Activated CD8-positive, alpha-beta T cell treated with anti-CD3 and anti-CD28 coated beads, Interleukin-2, amount 10 ng/mL, durations not matched to agents 7 days and 5 days (primary cell): ENCODE measurements at regions of chr12 and their contacts with region 1.

Region 1: GRCh38 chr12:116703214-116703795 is 34.6 kb downstream of the SPRING1 start:
- DNase-seq: peak; percentile 77
- ATAC-seq: peak; percentile 82
- H3K4me3 Mint-ChIP-seq: no peak overlapping the region
- H3K27ac Mint-ChIP-seq: no peak overlapping the region
- H3K4me1 Mint-ChIP-seq: peaks cover 1% of the 10 kb centered on the region
- H3K27me3 Mint-ChIP-seq: peaks cover 9% of the 10 kb centered on the region

Region 2: DNA sequence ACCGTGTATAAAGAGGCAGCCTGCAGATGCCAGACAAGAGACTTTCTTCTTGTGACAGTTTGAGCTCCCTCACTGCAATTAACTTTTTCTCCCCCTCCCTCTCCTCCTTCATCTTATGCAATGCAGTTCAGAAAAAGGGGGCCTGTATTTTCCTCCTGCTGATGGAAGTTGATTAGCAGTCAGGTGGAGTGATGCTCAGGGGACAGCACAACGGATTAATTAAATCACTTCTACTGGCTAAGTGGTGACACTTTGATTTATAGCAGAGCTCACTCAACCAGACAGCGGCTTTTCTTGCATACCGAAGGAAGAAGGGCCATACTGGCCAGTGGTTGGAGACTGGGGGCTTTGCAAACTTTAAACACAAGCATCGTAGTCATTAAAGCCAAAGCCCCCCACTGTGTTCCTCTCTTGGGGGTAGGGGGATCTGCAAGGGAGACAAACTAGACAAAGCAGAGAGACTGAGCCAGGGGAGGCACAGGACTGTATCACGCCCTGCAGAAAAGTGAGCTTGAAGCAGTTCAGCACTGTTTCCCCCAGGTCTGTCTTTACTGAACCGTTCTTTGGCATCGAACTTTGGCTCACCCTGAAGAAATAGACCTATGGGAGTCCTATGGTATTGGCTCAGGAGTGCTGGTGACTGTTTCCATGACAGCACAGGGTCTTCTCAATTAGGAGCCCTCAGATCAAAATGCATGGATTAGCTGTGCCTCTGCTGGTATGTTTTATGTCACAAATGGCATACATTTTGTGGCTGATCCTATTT is 13.1 kb before region 1 on chr12:
- CTCF ChIA-PET with region 1: interaction called, 16 read pairs
- POLR2A ChIA-PET with region 1: no interaction called
- DNase-seq: no peak
- ATAC-seq: no peak
- H3K4me3 Mint-ChIP-seq: no peak overlapping the region
- H3K27ac Mint-ChIP-seq: no peak overlapping the region
- H3K4me1 Mint-ChIP-seq: peaks cover 4% of the 10 kb centered on the region
- H3K27me3 Mint-ChIP-seq: peaks cover 27% of the 10 kb centered on the region

Region 3: DNA sequence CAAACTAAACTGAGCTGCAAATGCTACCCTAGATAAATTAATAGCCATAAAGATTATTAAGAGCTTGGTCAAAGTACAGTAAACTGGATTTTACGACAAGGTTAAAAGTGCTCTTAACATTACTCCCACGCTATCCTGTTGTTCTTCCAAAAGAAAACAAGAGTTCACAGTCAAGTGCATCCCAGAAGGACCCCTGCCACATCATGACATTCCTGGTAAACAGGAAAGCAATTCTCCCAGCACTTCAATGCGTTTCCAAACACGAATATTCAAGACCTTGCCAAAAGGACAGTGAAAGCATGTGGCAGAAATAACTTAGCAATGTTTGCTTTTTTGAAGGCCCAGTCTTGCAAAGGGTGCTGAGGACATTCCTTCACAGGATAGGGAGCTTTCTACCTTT is 23.4 kb after region 1 on chr12:
- CTCF ChIA-PET with region 1: interaction called, 21 read pairs
- POLR2A ChIA-PET with region 1: no interaction called
- DNase-seq: no peak
- ATAC-seq: no peak
- H3K4me3 Mint-ChIP-seq: no peak overlapping the region
- H3K27ac Mint-ChIP-seq: no peak overlapping the region
- H3K4me1 Mint-ChIP-seq: peaks cover 4% of the 10 kb centered on the region
- H3K27me3 Mint-ChIP-seq: no peaks in the 10 kb centered on the region